ENCODE measurements at regions of chr11 and their contacts with region 1.

Region 1: GRCh38 chr11:122754553-122755322 is 83.6 kb upstream of the CRTAM start:
- DNase-seq: peak in 4 of 5 donors; percentile 42 to 51 (median 44)
- H3K4me3 ChIP-seq: no peak overlapping the region
- H3K4me3 Mint-ChIP-seq: peak overlapping the region in 3 of 8 donors; percentile 30 to 49 (median 35)
- H3K27ac ChIP-seq: no peak overlapping the region
- H3K27ac Mint-ChIP-seq: peak overlapping the region in 5 of 7 donors; percentile 3 to 84 (median 54)
- H3K4me1 ChIP-seq: peaks cover 29% of the 10 kb centered on the region
- H3K4me1 Mint-ChIP-seq: peaks cover 31 to 58% (median 46%) of the 10 kb centered on the region in 4 donors
- H3K27me3 ChIP-seq: no peaks in the 10 kb centered on the region
- H3K27me3 Mint-ChIP-seq: no peaks in the 10 kb centered on the region

Region 2: DNA sequence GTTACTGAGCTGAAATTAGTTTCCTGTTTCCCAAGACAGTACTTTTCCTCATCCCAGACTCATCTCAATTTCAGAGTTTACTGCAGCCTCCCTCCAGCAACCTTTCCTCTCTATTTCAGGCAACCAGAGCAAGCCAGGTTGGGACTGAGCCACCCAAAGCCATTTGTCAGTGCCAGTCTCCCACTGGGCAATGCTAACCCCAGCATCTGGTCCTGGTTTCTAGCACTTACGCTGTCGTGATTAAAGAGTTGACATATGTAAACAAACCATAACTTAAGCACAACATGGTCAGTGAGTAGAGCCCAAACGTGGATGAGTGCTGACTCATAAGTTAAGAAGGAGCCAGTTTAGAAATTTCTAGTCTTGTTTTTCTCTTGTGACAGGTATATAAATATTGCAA is 519.1 kb before region 1 on chr11:
- CTCF ChIA-PET with region 1: no interaction called
- POLR2A ChIA-PET with region 1: no interaction called
- intact Hi-C with region 1: no loop called
- DNase-seq: no peak
- H3K4me3 ChIP-seq: no peak overlapping the region
- H3K4me3 Mint-ChIP-seq: no peak overlapping the region
- H3K27ac ChIP-seq: no peak overlapping the region
- H3K27ac Mint-ChIP-seq: no peak overlapping the region
- H3K4me1 ChIP-seq: no peaks in the 10 kb centered on the region
- H3K4me1 Mint-ChIP-seq: no peaks in the 10 kb centered on the region
- H3K27me3 ChIP-seq: no peaks in the 10 kb centered on the region
- H3K27me3 Mint-ChIP-seq: peaks cover 2 to 3% of the 10 kb centered on the region in 2 donors

Region 3: DNA sequence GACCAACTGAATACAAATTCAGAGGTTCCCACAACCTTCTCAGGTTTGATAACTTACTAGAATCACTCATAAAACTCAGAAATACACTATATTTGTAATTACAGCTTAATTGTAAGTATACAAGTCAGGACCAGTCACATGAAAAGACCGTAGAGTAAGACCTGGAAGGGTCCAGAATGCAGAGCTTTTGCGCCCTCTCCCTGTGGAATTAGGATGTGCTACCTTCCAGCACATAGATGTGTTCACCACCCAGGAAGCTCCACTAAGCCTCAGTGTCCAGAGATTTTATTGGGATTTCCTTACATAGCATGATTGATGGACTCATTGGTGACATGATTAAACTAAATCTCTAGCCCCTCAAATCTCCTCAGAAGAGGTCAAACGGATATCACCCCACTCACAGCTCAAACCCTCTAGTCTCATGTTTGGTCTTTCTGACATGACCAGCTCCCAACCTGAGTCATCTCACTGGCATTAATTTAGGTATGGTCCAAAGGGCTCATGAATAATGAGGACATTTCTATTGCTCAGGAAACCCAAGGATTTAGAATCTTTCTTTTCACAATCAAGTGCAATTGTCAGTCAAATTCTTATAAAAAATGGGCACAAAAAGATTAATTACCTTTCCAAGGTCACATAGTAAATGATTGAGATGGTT is 176.4 kb before region 1 on chr11:
- CTCF ChIA-PET with region 1: interaction called, 6 read pairs
- POLR2A ChIA-PET with region 1: interaction called, 3 read pairs
- intact Hi-C with region 1: loop called (anchors 2 kb)
- DNase-seq: no peak
- H3K4me3 ChIP-seq: no peak overlapping the region
- H3K4me3 Mint-ChIP-seq: no peak overlapping the region
- H3K27ac ChIP-seq: no peak overlapping the region
- H3K27ac Mint-ChIP-seq: no peak overlapping the region
- H3K4me1 ChIP-seq: peaks cover 8% of the 10 kb centered on the region
- H3K4me1 Mint-ChIP-seq: peaks cover 5 to 9% (median 9%) of the 10 kb centered on the region in 4 donors
- H3K27me3 ChIP-seq: no peaks in the 10 kb centered on the region
- H3K27me3 Mint-ChIP-seq: peaks cover 2 to 7% of the 10 kb centered on the region in 2 donors

Region 4: DNA sequence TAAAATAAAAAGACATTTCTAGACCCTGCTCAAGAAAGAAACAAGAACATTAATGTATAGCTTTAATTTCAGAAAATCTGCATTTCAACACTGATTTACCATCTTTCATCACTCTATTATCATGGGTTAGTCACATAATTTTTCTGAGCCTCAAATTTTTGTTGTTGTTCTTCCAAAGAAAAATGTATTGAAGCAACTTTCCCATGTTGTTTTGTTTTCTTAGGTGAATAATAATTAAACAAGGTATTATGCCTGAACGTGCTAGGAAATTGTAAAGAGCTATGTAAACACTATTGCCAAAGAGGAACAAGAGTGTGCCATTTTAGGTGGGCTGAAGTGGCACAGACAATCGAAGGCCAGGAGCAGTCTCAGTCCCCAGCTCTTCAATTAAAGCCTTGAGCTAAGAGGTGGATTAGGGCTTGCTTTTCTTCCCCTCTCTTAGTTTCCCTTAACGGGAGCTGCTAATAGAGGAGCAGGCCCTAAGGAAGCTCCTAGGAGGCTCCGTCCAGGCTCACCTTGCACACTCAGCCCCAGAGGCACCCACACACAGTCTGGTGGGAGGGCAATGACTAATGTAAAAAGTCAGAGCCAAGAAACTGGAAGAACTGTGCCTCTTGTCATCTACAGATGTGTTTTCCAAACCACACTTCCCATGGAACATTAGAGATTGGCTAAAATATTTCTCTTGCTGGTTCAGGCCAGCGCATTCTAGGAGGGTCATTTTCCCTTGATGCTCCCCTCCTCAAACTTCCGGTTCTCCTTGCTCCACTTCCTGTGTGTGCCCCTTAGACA is 108.0 kb before region 1 on chr11:
- CTCF ChIA-PET with region 1: interaction called, 440 read pairs
- POLR2A ChIA-PET with region 1: interaction called, 3 read pairs
- intact Hi-C with region 1: no loop called
- DNase-seq: no peak
- H3K4me3 ChIP-seq: no peak overlapping the region
- H3K4me3 Mint-ChIP-seq: no peak overlapping the region
- H3K27ac ChIP-seq: no peak overlapping the region
- H3K27ac Mint-ChIP-seq: no peak overlapping the region
- H3K4me1 ChIP-seq: no peaks in the 10 kb centered on the region
- H3K4me1 Mint-ChIP-seq: no peaks in the 10 kb centered on the region
- H3K27me3 ChIP-seq: no peaks in the 10 kb centered on the region
- H3K27me3 Mint-ChIP-seq: no peaks in the 10 kb centered on the region

Region 5: GRCh38 chr11:122690801-122691548 is 63.8 kb before region 1 on chr11:
- CTCF ChIA-PET with region 1: interaction called, 86 read pairs
- POLR2A ChIA-PET with region 1: interaction called, 131 read pairs
- intact Hi-C with region 1: no loop called
- DNase-seq: peak in 3 of 5 donors; percentile 14 to 26 (median 18)
- H3K4me3 ChIP-seq: peak overlapping the region in 1 of 2 donors; percentile 40
- H3K4me3 Mint-ChIP-seq: peak overlapping the region; percentile 74 to 88 (median 76)
- H3K27ac ChIP-seq: peak overlapping the region; percentile 63
- H3K27ac Mint-ChIP-seq: peak overlapping the region; percentile 92 to 94 (median 93)
- H3K4me1 ChIP-seq: peaks cover 76% of the 10 kb centered on the region
- H3K4me1 Mint-ChIP-seq: peaks cover 55 to 87% (median 73%) of the 10 kb centered on the region in 4 donors
- H3K27me3 ChIP-seq: no peaks in the 10 kb centered on the region
- H3K27me3 Mint-ChIP-seq: no peaks in the 10 kb centered on the region

Region 6: DNA sequence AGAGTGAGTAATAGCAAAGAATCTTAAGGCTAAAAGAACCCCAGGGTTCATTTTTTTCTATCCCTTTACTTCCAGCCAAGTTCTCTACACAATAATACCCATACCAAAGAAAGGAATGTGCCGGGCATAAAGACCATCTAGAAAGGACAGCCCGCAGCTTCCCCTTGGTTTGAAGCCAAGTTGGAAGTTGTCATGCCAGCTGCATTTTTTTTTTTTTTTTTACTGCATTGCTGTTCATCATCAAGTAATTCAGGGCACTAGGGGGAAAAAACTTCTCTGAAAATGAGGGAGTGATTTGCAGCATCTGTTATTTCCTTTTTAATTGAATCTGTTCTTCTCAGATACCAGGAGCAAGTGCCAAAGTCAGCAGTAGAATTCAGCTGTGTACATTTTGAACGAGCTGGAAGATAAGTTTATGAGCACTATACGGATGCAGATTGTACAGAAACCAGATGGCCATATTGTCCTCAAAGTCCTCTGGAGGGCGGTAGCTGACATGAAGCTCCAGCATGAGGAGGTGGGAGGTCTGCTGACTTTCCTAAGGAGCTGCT is 42.8 kb before region 1 on chr11:
- CTCF ChIA-PET with region 1: interaction called, 32 read pairs
- POLR2A ChIA-PET with region 1: no interaction called
- intact Hi-C with region 1: loop called (anchors 5 kb)
- DNase-seq: no peak
- H3K4me3 ChIP-seq: no peak overlapping the region
- H3K4me3 Mint-ChIP-seq: no peak overlapping the region
- H3K27ac ChIP-seq: no peak overlapping the region
- H3K27ac Mint-ChIP-seq: peak overlapping the region in 1 of 7 donors; percentile 36
- H3K4me1 ChIP-seq: peaks cover 9% of the 10 kb centered on the region
- H3K4me1 Mint-ChIP-seq: peaks cover 18 to 54% (median 31%) of the 10 kb centered on the region in 4 donors
- H3K27me3 ChIP-seq: no peaks in the 10 kb centered on the region
- H3K27me3 Mint-ChIP-seq: no peaks in the 10 kb centered on the region

Region 7: DNA sequence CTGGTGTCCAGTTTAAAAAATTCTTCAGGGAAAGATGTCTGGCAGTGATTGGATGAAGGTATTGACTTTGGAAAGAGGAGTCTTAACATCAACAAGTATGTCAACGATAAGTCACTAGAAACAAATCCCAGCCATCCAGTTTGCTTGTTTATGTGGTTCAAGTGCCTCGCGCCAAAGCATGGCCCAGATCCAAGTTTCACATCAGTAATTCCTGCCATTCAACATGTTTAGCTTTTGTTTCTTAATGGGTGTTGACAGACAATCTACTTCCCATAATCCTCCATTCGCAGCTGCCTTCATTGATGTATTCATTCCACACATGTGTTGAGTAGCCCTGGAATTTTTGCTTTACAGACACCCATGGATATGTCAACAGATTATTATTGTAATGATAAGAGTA is 21.4 kb before region 1 on chr11:
- CTCF ChIA-PET with region 1: interaction called, 46 read pairs
- POLR2A ChIA-PET with region 1: interaction called, 64 read pairs
- intact Hi-C with region 1: no loop called
- DNase-seq: no peak
- H3K4me3 ChIP-seq: no peak overlapping the region
- H3K4me3 Mint-ChIP-seq: peak overlapping the region in 2 of 8 donors; percentile 15 to 39
- H3K27ac ChIP-seq: no peak overlapping the region
- H3K27ac Mint-ChIP-seq: peak overlapping the region in 2 of 7 donors; percentile 32 to 57
- H3K4me1 ChIP-seq: peaks cover 58% of the 10 kb centered on the region
- H3K4me1 Mint-ChIP-seq: peaks cover 12 to 40% (median 26%) of the 10 kb centered on the region in 4 donors
- H3K27me3 ChIP-seq: no peaks in the 10 kb centered on the region
- H3K27me3 Mint-ChIP-seq: no peaks in the 10 kb centered on the region

Region 8: GRCh38 chr11:122781378-122782195 is 26.8 kb after region 1 on chr11:
- CTCF ChIA-PET with region 1: interaction called, 133 read pairs
- POLR2A ChIA-PET with region 1: no interaction called
- intact Hi-C with region 1: loop called (anchors 1 kb)
- DNase-seq: peak; percentile 62 to 71 (median 67)
- H3K4me3 ChIP-seq: no peak overlapping the region
- H3K4me3 Mint-ChIP-seq: no peak overlapping the region
- H3K27ac ChIP-seq: no peak overlapping the region
- H3K27ac Mint-ChIP-seq: no peak overlapping the region
- H3K4me1 ChIP-seq: no peaks in the 10 kb centered on the region
- H3K4me1 Mint-ChIP-seq: peaks cover 0 to 8% (median 1%) of the 10 kb centered on the region in 4 donors
- H3K27me3 ChIP-seq: no peaks in the 10 kb centered on the region
- H3K27me3 Mint-ChIP-seq: no peaks in the 10 kb centered on the region

Region 9: DNA sequence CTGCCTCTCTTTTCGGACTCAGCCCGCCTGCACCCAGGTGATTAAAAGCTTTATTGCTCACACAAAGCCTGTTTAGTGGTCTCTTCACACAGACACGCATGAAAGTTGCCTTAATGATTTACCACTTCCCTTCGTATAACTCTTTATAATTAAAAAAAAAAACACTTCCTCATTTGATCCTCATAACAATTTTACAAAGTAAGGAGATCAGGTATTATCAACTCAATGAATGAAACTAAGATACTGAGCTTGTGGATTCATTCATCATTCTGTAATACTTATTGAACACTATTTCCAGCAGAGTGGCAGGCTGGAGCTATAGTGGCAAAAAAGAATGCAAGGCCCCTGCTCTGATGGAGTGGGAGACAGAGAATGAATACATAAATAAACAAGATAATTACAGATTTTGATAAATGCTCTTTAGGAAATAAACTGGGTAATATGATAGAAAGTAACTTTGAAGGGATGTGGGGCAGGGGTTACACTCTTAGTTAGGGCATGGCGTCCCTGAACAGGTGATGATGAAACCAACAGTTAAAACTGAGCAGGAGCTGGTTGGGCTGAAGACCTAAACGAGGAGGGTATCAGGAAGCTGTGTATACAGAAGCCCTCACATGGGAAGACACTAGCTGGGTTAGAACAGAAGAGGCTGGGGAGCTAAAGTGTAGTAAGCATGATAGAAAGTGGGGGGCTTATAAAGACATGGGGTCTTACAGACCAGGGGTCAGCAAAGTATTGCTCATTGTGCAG is 78.2 kb after region 1 on chr11:
- CTCF ChIA-PET with region 1: no interaction called
- POLR2A ChIA-PET with region 1: no interaction called
- intact Hi-C with region 1: no loop called
- DNase-seq: no peak
- H3K4me3 ChIP-seq: no peak overlapping the region
- H3K4me3 Mint-ChIP-seq: no peak overlapping the region
- H3K27ac ChIP-seq: no peak overlapping the region
- H3K27ac Mint-ChIP-seq: no peak overlapping the region
- H3K4me1 ChIP-seq: no peaks in the 10 kb centered on the region
- H3K4me1 Mint-ChIP-seq: peaks cover 0 to 2% (median 0%) of the 10 kb centered on the region in 4 donors
- H3K27me3 ChIP-seq: no peaks in the 10 kb centered on the region
- H3K27me3 Mint-ChIP-seq: peaks cover 8 to 11% of the 10 kb centered on the region in 2 donors